A673 (cell line): ENCODE measurements at regions of chr12 and their contacts with region 1.

Region 1: DNA sequence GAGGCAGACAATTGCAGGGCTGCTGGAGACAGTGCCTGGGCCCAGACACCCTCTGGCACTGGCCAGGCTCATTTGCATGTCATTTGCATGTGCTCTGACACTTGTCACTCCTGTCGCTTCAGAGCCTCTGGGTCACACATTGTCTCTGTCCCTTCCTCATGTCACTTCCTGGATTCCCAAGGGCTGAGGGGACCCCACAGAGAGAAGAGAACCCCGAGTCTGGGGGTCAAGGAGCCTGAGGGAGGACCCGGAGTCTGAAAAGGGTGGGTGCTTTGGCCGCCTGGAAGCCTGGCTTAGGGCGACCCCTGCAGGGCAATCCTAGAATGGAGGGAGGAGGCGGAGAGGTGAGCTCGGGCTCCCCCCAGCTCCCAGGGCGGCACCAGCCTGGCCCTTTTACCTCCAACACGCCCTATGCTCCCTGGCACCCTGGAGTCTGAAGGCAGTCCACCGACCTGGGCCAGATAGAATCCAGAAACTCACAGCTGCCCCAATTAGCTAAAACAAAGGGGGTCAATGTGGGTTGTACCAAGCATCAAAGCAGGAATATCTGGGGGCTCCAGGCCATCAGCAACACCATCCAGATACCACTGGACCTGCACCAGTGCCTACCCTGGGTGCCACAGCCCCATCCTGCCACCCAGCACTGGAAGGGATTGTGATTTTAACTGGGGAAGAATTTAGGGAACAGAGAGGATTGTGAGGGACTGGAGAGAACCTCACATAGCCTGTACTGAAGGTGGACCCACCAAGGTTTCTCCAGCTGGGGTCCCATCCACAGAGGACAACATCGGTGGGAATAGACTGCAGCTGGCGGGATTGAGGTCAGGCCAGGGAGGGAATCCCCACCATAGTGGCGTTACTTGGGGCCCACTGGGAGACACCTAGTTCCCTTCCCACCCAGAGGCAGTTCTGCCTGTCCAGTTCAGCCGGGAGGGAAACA is 21.8 kb upstream of the KRT78 start:
- DNase-seq: peak; percentile 73
- H3K4me3 ChIP-seq: no peak overlapping the region
- H3K27ac ChIP-seq: peak overlapping the region; percentile 51
- H3K4me1 ChIP-seq: peaks cover 52% of the 10 kb centered on the region
- H3K27me3 ChIP-seq: no peaks in the 10 kb centered on the region
- CTCF ChIP-seq: peak; percentile 93

Region 2: GRCh38 chr12:52372216-52373154 is 498.1 kb before region 1 on chr12:
- CTCF ChIA-PET with region 1: interaction called, 4 read pairs
- POLR2A ChIA-PET with region 1: no interaction called
- intact Hi-C with region 1: loop called (anchors 5 kb)
- DNase-seq: peak; percentile 76
- H3K4me3 ChIP-seq: no peak overlapping the region
- H3K27ac ChIP-seq: no peak overlapping the region
- H3K4me1 ChIP-seq: no peaks in the 10 kb centered on the region
- H3K27me3 ChIP-seq: no peaks in the 10 kb centered on the region
- CTCF ChIP-seq: peak; percentile 73

Region 3: DNA sequence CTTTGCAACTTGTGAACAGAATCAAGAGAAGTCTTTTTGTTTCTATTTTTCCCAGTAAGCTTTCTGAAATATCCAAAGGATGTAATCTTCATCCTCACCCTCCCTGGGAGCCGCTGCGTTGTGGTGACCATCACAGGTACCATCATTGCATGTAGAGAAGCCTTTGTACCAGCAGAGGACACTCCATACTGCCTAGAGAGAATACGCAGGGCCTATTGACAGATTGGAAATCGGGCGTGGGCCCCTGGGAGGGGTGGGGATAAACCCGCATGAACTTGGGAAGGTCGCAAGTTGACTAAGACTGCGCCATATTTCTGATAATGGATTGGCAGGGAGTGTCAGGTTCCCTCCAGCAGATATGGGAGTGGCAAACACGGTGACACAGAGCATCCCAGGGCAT is 203.1 kb before region 1 on chr12:
- CTCF ChIA-PET with region 1: interaction called, 8 read pairs
- POLR2A ChIA-PET with region 1: no interaction called
- intact Hi-C with region 1: loop called (anchors 2 kb)
- DNase-seq: peak; percentile 35
- H3K4me3 ChIP-seq: no peak overlapping the region
- H3K27ac ChIP-seq: no peak overlapping the region
- H3K4me1 ChIP-seq: no peaks in the 10 kb centered on the region
- H3K27me3 ChIP-seq: no peaks in the 10 kb centered on the region
- CTCF ChIP-seq: peak; percentile 64